Caki2 (cell line): ENCODE measurements at regions of chr18 and their contacts with region 1.

Region 1: GRCh38 chr18:12679183-12679786 is 21.4 kb upstream of the SPIRE1 start:
- DNase-seq: no peak

Region 2: DNA sequence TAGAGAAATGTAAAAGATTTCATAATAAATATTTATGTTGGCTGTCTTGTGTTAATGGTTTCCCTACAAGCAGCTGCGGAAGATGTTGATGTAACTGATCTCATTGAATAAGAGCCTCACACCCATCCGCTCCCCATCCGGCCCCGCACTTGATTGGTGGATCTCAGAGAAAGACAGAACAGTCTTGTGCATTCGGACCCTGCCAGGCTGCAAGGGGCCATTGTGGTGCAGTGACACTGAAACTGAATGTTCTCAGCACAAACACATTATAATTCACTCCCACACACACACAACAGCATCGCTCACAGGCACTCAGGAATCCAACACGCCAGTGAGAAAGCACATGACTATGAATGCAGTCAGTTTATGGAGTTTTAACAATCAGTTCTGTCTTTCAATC is 223.8 kb before region 1 on chr18:
- in situ Hi-C with region 1: loop called (anchors 10 kb)
- DNase-seq: no peak